Kidney (tissue), 22 donors: ENCODE measurements at regions of chr5 and their contacts with region 1.

Region 1: DNA sequence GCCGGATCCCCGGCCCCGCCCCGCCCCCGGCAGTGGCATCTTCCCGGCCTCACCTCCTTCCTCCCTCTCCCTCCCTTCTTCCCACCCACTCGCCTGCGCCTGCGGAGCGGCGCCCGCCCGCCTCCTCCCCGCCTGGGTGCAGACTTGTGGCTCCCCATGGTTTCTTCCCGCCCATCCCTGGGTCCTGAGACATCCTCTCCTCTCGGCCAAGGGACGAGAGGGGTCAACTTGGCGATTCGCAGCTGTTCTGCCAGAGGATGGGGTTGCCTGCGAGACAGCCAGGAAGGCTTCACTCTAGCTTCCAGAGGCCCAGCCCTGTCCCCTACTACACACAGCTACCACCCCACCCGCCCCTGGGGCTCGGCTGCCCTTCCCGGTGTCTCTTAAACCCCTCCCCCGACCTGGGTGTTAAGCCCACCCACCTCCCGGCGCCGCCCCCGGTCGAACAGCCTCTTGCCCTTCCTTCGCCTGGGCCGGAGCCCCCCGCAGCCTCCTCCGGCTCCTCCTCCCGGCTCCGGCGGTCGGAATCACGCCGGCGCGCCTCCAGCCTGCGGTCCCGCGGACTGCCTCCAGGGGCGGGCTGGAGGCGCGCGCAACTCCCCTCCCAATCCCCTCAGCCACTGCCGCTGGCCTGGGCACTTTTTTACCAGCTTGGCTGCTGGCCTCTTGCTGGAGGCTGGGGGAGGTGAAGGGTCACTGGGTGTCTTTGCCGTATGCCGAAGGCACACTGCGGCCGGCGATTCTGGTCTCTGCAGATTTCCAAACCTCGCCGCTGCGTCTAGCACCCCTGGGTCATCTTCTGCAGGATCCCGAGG is 1.9 kb downstream of the JADE2 start:
- DNase-seq: peak; percentile 88 to 95 (median 92)
- H3K4me3 ChIP-seq: peak overlapping the region; percentile 49 to 93 (median 74)
- H3K27ac ChIP-seq: peak overlapping the region; percentile 98 to 99
- H3K4me1 ChIP-seq: peaks cover 0 to 37% (median 25%) of the 10 kb centered on the region in 3 donors
- H3K27me3 ChIP-seq: no peaks in the 10 kb centered on the region
- CTCF ChIP-seq: peak; percentile 78

Region 2: GRCh38 chr5:134411546-134412266 is 115.6 kb before region 1 on chr5 and contains the start of gene CDKN2AIPNL:
- intact Hi-C with region 1: loop called (anchors 10 kb)
- DNase-seq: peak; percentile 92 to 97 (median 94)
- H3K4me3 ChIP-seq: peak within 1 kb of the TSS; percentile 60 to 90 (median 80)
- H3K27ac ChIP-seq: peak within 1 kb of the TSS; percentile 80 to 87
- H3K4me1 ChIP-seq: peaks cover 0 to 31% (median 10%) of the 10 kb centered on the region in 3 donors
- H3K27me3 ChIP-seq: no peaks in the 10 kb centered on the region
- CTCF ChIP-seq: peak; percentile 73
- total RNA-seq, gene CDKN2AIPNL: 19.0 TPM